AG04449 (cell line): ENCODE measurements at regions of chr14 and their contacts with region 1.

Region 1: DNA sequence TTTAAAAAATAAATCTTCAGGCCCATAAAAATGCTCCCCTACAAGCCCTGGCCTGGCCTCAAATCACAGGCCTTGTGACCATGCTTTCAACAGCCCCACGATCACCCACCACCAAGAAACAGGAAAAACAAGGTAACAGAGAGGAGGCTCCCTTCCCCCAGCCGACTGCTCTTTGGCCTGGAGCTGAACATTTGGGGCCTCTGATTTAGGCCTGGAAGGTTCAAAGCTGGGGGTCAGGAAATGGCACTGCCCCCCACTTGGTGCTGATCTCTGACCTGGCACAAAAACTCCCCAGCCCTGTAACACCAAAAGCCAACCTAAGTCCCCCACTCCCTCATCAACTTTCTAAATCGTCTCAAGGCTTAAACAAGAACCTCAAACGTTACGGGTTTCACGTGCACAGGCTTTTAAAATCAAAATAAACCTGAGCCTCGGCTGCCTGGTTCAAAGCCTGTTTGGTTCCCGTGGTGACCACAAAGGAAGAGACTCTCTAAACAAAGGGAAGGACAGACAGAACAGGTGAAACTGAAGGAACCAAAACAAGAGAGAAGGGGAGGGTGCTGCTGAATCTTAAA is 9.0 kb downstream of the ACTN1 start:
- DNase-seq: no peak
- H3K4me3 ChIP-seq: no peak overlapping the region
- CTCF ChIP-seq: no peak

Region 2: DNA sequence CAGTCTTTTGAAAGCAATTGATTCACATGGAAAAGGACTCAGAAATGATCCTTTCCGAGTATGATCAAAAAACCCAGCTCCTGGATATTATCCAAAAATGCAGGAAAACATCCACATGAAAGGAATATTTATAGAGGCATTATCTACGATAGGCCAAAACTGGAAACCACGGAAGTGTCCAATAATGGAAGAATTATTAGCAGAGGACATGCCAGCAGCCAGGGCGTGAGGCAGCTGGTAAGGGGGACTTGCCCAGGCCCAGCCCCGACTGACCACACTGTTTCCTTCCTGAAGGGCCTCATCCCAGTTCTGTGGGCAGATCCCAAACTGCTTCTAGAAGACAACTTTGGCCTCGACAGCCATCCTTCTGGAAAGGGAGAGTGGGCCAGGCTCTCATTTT is 11.6 kb before region 1 on chr14:
- CTCF ChIA-PET with region 1: interaction called, 16 read pairs
- POLR2A ChIA-PET with region 1: interaction called, 5 read pairs
- DNase-seq: no peak
- H3K4me3 ChIP-seq: no peak overlapping the region
- CTCF ChIP-seq: no peak